Gastrocnemius medialis (tissue), 4 donors: ENCODE measurements at regions of chr7 and their contacts with region 1.

Region 1: DNA sequence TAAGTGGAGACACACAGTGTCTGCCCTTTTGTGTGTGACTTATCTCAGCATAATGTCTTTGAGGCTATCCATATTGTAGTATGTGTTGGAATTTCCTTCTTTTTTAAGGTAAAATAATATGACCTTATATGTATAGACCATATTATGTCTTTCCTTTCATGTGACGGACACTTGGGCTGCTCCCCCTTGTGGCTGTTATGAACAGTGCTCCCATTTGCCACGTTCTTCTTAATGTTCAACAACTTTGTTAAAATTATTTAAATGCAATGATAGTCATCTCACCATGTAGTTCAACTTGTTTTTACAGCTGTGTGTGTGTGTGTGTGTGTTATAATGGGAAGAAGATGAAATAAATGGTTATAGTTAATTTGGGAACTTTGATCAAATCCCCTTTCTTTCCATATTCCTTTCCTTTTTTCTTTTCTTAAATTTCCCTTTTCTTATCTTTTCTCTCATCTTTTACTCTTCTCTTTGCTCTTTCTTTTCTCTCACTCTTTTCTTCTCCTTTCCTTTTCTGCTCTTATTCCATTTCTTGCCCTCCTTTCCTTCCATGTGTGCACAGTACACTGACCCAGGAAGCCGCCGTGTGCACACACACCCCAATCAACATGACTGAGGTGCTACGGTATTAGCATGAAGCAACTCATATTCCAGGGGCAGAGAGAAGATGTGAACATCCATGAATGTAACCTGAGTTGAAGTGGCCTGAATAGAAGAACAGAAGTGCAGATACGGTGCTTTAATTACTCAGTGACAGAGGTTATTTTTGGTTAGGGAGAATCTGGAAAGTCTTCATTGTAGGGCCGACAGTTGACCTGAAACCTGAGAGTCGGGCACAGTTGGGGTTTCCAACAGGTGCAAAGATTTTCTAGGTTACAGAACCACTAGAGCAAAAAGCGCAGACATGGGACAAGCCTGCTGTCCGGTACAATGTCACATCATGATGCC is 596.7 kb downstream of the SDK1 start:
- DNase-seq: peak; percentile 68 to 73
- ATAC-seq: peak; percentile 99
- H3K4me3 ChIP-seq: no peak overlapping the region
- H3K27ac ChIP-seq: peak overlapping the region; percentile 65 to 71 (median 68)
- H3K4me1 ChIP-seq: peaks cover 29 to 35% of the 10 kb centered on the region in 2 donors
- H3K27me3 ChIP-seq: no peaks in the 10 kb centered on the region
- CTCF ChIP-seq: peak; percentile 30 to 70 (median 58)
- POLR2A ChIP-seq: no peak

Region 2: DNA sequence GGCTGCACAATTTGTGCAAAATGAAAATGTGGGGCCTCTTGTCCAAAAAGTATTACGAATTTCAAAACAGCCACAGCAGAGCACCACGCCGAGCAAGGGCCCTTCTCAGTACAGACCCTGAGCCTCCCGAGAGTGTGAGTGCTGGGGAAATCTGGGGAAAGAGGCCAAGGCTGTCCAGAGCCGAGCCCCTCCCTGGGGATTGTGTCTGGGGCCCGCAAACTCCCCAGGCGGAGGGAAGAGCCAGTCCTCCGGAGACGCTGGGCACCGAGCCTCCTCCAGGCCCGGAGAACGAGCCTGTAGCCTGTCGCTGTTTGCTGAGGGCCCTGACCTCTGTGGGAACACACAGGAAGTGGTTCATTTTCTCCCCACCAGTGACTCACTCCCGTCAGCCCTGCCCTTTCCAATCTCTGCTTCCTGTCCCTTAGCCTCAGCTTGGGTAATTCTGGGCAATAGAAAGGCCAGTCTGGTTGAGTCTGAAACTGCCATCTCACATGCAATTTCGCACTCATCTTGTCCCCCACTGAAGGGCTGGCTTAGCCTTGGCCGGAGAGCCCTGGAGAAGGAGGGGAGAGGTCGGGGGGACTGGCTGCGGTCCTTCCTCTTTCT is 1034.1 kb before region 1 on chr7:
- in situ Hi-C with region 1: no loop called
- intact Hi-C with region 1: loop called (anchors 10 kb)
- DNase-seq: peak; percentile 61 to 74
- ATAC-seq: peak; percentile 57 to 78
- H3K4me3 ChIP-seq: peak overlapping the region in 2 of 4 donors; percentile 16 to 21
- H3K27ac ChIP-seq: peak overlapping the region; percentile 68 to 83 (median 77)
- H3K4me1 ChIP-seq: peaks cover 11 to 19% of the 10 kb centered on the region in 2 donors
- H3K27me3 ChIP-seq: no peaks in the 10 kb centered on the region
- CTCF ChIP-seq: no peak
- POLR2A ChIP-seq: peak in 1 of 2 donors; percentile 41

Region 3: DNA sequence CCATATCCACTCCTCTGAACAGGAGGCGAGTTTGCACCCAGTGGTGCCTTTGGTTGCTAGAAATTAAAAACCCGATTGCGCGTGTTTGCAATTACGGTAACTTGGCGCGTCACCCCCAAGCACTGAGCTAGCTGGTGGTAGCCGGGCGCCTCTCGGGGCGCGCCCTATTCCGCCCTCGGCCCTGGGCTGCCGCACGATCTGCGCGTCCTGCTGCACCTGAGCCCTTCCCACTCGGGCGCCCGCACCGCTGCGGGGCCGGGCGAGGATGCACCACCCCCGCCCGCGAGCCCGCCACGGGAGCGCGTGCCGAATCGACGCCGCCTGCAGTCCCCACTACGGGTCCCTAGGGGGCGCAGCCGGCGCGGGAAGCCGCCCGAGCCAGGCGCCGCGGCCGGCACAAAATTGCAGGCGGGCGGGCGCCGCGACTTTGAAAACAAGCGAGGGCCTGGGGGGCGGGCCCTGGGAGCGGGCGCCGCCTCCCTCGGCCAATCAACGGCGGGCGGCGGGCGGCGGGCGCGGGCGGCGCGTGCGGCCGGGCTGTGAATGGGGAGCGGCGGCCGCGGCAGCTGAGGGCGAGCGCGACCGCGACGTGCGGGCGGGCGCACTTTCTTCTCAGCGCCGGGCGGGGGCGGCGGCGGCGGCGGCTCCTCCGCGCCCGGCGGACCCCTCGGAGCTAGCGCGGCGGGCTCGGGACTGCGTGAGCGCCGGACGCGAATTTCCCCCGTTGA is 596.9 kb before region 1 on chr7 and contains the start of gene SDK1:
- in situ Hi-C with region 1: no loop called
- intact Hi-C with region 1: loop called (anchors 2 kb)
- DNase-seq: peak; percentile 70 to 85
- ATAC-seq: peak; percentile 83 to 89
- H3K4me3 ChIP-seq: peak within 1 kb of the TSS; percentile 51 to 62 (median 56)
- H3K27ac ChIP-seq: peak within 1 kb of the TSS in 1 of 4 donors; percentile 41
- H3K4me1 ChIP-seq: peaks cover 5 to 14% of the 10 kb centered on the region in 2 donors
- H3K27me3 ChIP-seq: peaks cover 2 to 7% (median 3%) of the 10 kb centered on the region in 3 donors
- CTCF ChIP-seq: peak in 4 of 5 experiments; percentile 90 to 96 (median 94)
- POLR2A ChIP-seq: peak; percentile 31 to 63
- total RNA-seq, gene SDK1: 1.2 to 1.8 (median 1.5) TPM

Region 4: GRCh38 chr7:4700577-4701235 is 803.0 kb after region 1 on chr7:
- in situ Hi-C with region 1: no loop called
- intact Hi-C with region 1: no loop called
- DNase-seq: no peak
- ATAC-seq: no peak
- H3K4me3 ChIP-seq: no peak overlapping the region
- H3K27ac ChIP-seq: no peak overlapping the region
- H3K4me1 ChIP-seq: peaks cover 28 to 37% of the 10 kb centered on the region in 2 donors
- H3K27me3 ChIP-seq: no peaks in the 10 kb centered on the region
- CTCF ChIP-seq: no peak
- POLR2A ChIP-seq: no peak